Activated naive CD4-positive, alpha-beta T cell treated with anti-CD3 and anti-CD28 coated beads for 36 hours (primary cell): ENCODE measurements at regions of chr18 and their contacts with region 1.

Region 1: DNA sequence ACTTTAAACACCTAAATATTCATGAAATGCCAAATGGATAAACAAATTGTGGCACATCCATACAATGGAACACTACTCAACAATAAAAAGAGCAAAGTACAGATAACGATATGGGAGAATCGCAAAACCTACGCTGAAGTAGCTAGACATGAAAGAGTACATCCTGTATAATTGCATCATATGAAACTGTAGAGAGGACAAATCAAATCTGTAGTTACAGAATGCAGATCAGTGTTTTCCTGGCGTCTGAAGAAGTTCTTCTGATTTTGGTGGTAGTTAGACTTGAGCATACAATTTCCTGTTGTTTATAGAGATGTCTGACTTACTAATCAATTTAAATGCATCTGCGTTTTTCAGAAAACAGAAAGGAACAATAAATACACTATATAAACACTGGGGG is 394.4 kb downstream of the SOCS6 start:
- DNase-seq: no peak
- H3K4me3 Mint-ChIP-seq: peak overlapping the region; percentile 48
- H3K27ac Mint-ChIP-seq: peak overlapping the region; percentile 86
- H3K4me1 Mint-ChIP-seq: peaks cover 31% of the 10 kb centered on the region
- H3K27me3 Mint-ChIP-seq: no peaks in the 10 kb centered on the region

Region 2: GRCh38 chr18:70553245-70553935 is 129.9 kb before region 1 on chr18:
- CTCF ChIA-PET with region 1: no interaction called
- intact Hi-C with region 1: no loop called
- DNase-seq: no peak
- H3K4me3 Mint-ChIP-seq: no peak overlapping the region
- H3K27ac Mint-ChIP-seq: no peak overlapping the region
- H3K4me1 Mint-ChIP-seq: peaks cover 12% of the 10 kb centered on the region
- H3K27me3 Mint-ChIP-seq: no peaks in the 10 kb centered on the region

Region 3: GRCh38 chr18:70621710-70622109 is 61.6 kb before region 1 on chr18:
- CTCF ChIA-PET with region 1: no interaction called
- intact Hi-C with region 1: loop called (anchors 1 kb)
- DNase-seq: no peak
- H3K4me3 Mint-ChIP-seq: peak overlapping the region; percentile 66
- H3K27ac Mint-ChIP-seq: peak overlapping the region; percentile 91
- H3K4me1 Mint-ChIP-seq: peaks cover 67% of the 10 kb centered on the region
- H3K27me3 Mint-ChIP-seq: no peaks in the 10 kb centered on the region

Region 4: DNA sequence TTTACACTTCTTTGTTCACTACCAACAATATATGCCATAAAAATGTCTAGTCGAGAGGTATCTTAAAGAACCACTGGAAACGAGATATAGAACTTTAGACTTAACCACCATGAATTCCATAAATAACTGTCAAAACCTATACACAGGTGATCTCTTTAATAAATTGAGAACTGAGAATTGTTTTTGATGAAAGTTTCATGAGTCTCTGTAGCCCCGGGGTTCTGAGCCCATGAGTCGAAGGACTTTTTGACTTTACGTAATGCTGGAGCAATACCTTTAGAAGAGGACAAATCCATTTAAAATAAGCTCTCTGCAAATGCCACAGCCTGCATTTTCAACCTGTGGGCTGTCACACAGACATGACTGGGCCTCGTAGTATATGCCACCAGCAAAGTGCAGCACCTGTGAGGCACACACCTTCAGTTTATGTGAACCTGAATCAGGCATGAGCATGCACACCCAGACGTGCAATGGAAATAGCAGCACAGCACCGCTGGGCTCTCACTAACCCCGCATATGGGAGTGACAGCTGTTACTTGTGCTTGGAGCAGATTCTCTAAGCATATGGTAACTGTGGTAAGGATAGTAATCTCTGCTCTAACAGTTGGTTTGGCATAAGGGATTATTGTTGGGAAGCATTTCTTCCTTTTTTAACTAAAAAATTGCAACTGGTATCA is 11.2 kb before region 1 on chr18:
- CTCF ChIA-PET with region 1: no interaction called
- intact Hi-C with region 1: loop called (anchors 1 kb)
- DNase-seq: peak; percentile 24
- H3K4me3 Mint-ChIP-seq: peak overlapping the region; percentile 14
- H3K27ac Mint-ChIP-seq: peak overlapping the region; percentile 38
- H3K4me1 Mint-ChIP-seq: peaks cover 40% of the 10 kb centered on the region
- H3K27me3 Mint-ChIP-seq: no peaks in the 10 kb centered on the region